IMR-90 (cell line): ENCODE measurements at regions of chr5 and their contacts with region 1.

Region 1: GRCh38 chr5:56814963-56815658 is at the start of gene MAP3K1:
- DNase-seq: peak; percentile 60
- ATAC-seq: peak; percentile 93
- H3K4me3 ChIP-seq: peak within 1 kb of the TSS; percentile 99
- H3K27ac ChIP-seq: peak within 1 kb of the TSS; percentile 83
- H3K4me1 ChIP-seq: peaks cover 3% of the 10 kb centered on the region; the same call in 1 of the 2 replicates
- H3K27me3 ChIP-seq: no peaks in the 10 kb centered on the region
- CTCF ChIP-seq: no peak
- POLR2A ChIP-seq: no peak
- RAD21 ChIP-seq: no peak
- total RNA-seq, gene MAP3K1: 18.8 and 21.9 TPM in 2 replicates

Region 2: DNA sequence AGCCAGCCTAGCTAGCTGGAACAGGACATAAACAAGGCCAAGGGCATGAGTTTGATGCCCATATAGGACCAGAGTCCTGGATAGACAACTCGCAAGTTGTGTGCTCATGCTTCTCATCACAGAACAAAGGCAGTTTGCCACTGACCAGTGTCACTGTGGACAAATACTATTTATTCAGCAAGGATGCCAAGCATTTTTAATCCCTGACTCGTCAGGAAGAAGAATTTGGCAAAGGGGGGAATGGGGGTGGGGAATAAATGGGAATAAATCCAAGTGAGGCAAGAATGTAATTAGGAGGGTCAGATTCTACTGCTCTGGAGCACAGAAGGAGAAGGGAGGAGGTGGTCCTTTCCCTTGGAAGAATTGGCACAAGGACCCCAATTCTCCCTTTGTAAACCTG is 535.1 kb before region 1 on chr5:
- CTCF ChIA-PET with region 1: no interaction called
- POLR2A ChIA-PET with region 1: interaction called, 4 read pairs
- dilution Hi-C with region 1: no loop called
- in situ Hi-C with region 1: no loop called
- intact Hi-C with region 1: loop called (anchors 2 kb)
- DNase-seq: peak; percentile 82
- ATAC-seq: peak; percentile 39
- H3K4me3 ChIP-seq: no peak overlapping the region
- H3K27ac ChIP-seq: peak overlapping the region; percentile 98
- H3K4me1 ChIP-seq: peaks cover 24% of the 10 kb centered on the region
- H3K27me3 ChIP-seq: no peaks in the 10 kb centered on the region
- CTCF ChIP-seq: no peak
- POLR2A ChIP-seq: no peak
- RAD21 ChIP-seq: no peak

Region 3: DNA sequence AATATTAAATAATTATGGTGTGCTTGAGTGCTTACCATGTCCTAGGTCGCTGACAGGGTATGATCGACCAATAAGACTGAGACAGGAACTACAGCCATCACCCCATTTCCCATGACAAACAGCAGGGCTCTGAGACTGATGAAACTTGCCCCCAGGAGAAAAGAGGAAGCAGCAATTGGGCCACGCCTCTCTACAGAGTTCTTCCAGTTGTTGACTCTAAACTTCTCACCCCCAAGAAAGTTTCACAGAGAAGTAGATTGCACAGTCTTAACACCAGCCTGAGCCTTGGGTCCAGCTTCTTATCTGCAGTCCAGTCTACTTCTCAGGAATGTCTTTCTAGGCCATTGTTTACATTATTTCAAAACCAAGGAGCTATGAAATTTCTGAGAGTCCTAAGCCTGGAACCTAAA is 399.8 kb before region 1 on chr5:
- CTCF ChIA-PET with region 1: no interaction called
- POLR2A ChIA-PET with region 1: no interaction called
- dilution Hi-C with region 1: no loop called
- in situ Hi-C with region 1: no loop called
- intact Hi-C with region 1: loop called (anchors 5 kb)
- DNase-seq: peak; percentile 91
- ATAC-seq: peak; percentile 98
- H3K4me3 ChIP-seq: no peak overlapping the region
- H3K27ac ChIP-seq: peak overlapping the region; percentile 90
- H3K4me1 ChIP-seq: peaks cover 12% of the 10 kb centered on the region
- H3K27me3 ChIP-seq: no peaks in the 10 kb centered on the region
- CTCF ChIP-seq: no peak
- POLR2A ChIP-seq: no peak
- RAD21 ChIP-seq: no peak

Region 4: GRCh38 chr5:56481428-56482357 is 333.4 kb before region 1 on chr5:
- CTCF ChIA-PET with region 1: interaction called, 4 read pairs
- POLR2A ChIA-PET with region 1: no interaction called
- dilution Hi-C with region 1: no loop called
- in situ Hi-C with region 1: no loop called
- intact Hi-C with region 1: loop called (anchors 2 kb)
- DNase-seq: peak; percentile 54
- ATAC-seq: peak; percentile 31
- H3K4me3 ChIP-seq: peak overlapping the region; percentile 37
- H3K27ac ChIP-seq: peak overlapping the region; percentile 58
- H3K4me1 ChIP-seq: peaks cover 21% of the 10 kb centered on the region
- H3K27me3 ChIP-seq: no peaks in the 10 kb centered on the region
- CTCF ChIP-seq: peak; percentile 27; the same call in 1 of the 2 replicates
- POLR2A ChIP-seq: 0 out of 2 replicates have a peak, but pooled peaks have one; percentile 42
- RAD21 ChIP-seq: peak; percentile 12; the same call in 1 of the 2 replicates

Region 5: DNA sequence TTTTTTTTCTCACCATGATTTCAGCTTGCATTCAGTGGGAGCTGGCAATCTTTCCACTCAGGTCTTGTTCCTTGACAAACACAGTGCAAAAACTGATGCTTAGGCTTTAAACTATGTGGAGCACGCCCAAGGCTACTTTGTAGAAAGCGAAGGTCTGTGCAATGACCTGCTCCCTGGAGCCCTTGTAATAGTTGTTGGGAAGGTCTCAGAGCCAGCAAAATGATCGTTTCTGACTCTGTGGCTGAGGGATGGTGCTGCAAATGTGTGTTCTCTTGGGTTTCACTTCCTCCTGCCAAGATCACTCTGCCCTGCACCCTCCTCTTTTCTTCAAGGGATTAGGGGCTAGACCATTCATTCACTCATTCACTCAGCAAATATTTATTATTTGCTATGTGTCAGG is 249.5 kb before region 1 on chr5:
- CTCF ChIA-PET with region 1: no interaction called
- POLR2A ChIA-PET with region 1: no interaction called
- dilution Hi-C with region 1: no loop called
- in situ Hi-C with region 1: no loop called
- intact Hi-C with region 1: loop called (anchors 5 kb)
- DNase-seq: no peak
- ATAC-seq: no peak
- H3K4me3 ChIP-seq: no peak overlapping the region
- H3K27ac ChIP-seq: peak overlapping the region; percentile 0; the same call in 1 of the 2 replicates
- H3K4me1 ChIP-seq: peaks cover 10% of the 10 kb centered on the region
- H3K27me3 ChIP-seq: no peaks in the 10 kb centered on the region
- CTCF ChIP-seq: no peak
- POLR2A ChIP-seq: no peak
- RAD21 ChIP-seq: no peak

Region 6: GRCh38 chr5:56625541-56625940 is 189.6 kb before region 1 on chr5:
- CTCF ChIA-PET with region 1: no interaction called
- POLR2A ChIA-PET with region 1: no interaction called
- dilution Hi-C with region 1: no loop called
- in situ Hi-C with region 1: no loop called
- intact Hi-C with region 1: loop called (anchors 2 kb)
- DNase-seq: peak; percentile 96
- ATAC-seq: peak; percentile 85
- H3K4me3 ChIP-seq: no peak overlapping the region
- H3K27ac ChIP-seq: peak overlapping the region; percentile 71; the same call in 1 of the 2 replicates
- H3K4me1 ChIP-seq: peaks cover 1% of the 10 kb centered on the region; the same call in 1 of the 2 replicates
- H3K27me3 ChIP-seq: no peaks in the 10 kb centered on the region
- CTCF ChIP-seq: no peak
- POLR2A ChIP-seq: no peak
- RAD21 ChIP-seq: no peak